Ovary (tissue), 10 donors: ENCODE measurements at regions of chr9 and their contacts with region 1.

Region 1: DNA sequence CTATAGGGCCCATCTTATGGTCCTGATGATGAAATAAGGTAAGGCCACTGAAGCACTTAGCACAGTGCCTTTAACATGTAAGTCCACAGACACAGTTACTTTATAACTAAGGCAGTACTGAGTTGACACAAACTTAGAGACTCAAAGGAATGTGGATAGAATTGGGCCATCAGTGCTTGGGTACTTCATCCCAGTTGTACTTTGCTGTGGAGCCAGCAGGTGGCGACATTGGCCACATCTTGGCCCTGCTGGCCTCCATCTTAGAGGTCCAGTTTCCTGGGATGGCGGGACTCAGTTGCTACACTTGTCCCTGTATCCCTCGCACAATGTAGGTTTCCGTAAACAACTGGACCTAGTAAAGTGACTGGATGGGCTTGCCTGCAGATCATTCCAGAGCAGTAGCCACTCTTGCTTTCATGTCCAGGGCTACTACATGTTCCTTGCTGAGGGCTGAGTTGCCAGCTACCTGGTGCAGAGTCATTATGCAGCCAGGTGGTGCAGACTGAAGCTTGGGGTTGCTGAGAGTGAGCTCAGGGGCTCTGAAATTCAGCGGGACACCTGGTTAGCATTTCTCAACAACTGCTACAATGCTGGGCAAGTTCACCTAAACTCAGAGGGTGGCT is 10.6 kb downstream of the MTAP start:
- DNase-seq: peak; percentile 30 to 73 (median 56)
- H3K4me3 ChIP-seq: no peak overlapping the region
- H3K27ac ChIP-seq: no peak overlapping the region
- H3K4me1 ChIP-seq: peaks cover 3% of the 10 kb centered on the region
- H3K27me3 ChIP-seq: no peaks in the 10 kb centered on the region
- CTCF ChIP-seq: peak; percentile 23 to 53 (median 34)
- EP300 ChIP-seq: no peak
- POLR2A ChIP-seq: no peak

Region 2: GRCh38 chr9:21761309-21761901 is 51.7 kb before region 1 on chr9:
- intact Hi-C with region 1: no loop called
- DNase-seq: no peak
- H3K4me3 ChIP-seq: no peak overlapping the region
- H3K27ac ChIP-seq: no peak overlapping the region
- H3K4me1 ChIP-seq: no peaks in the 10 kb centered on the region
- H3K27me3 ChIP-seq: no peaks in the 10 kb centered on the region
- CTCF ChIP-seq: no peak
- EP300 ChIP-seq: no peak
- POLR2A ChIP-seq: no peak

Region 3: DNA sequence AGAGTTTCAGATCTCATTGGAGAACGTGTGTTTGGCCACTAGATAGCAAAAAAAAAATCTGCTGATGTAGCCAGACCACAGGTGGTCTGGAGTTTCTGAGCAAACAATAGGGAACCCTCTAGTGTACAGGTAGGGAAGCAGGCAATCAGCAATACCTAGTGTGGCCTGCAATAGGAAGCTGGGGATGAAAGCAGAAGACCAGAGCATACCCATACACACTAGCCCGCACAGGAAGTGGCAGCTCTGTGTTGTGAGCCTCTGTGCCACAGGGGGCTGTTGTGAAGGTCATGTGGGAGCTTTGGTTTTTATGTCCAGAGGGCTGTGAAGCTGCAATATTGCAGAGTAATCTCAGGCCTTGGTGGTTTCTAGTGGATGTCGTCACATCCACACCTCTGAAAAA is 70.6 kb after region 1 on chr9:
- intact Hi-C with region 1: no loop called
- DNase-seq: no peak
- H3K4me3 ChIP-seq: no peak overlapping the region
- H3K27ac ChIP-seq: no peak overlapping the region
- H3K4me1 ChIP-seq: no peaks in the 10 kb centered on the region
- H3K27me3 ChIP-seq: no peaks in the 10 kb centered on the region
- CTCF ChIP-seq: no peak
- EP300 ChIP-seq: no peak
- POLR2A ChIP-seq: no peak

Region 4: DNA sequence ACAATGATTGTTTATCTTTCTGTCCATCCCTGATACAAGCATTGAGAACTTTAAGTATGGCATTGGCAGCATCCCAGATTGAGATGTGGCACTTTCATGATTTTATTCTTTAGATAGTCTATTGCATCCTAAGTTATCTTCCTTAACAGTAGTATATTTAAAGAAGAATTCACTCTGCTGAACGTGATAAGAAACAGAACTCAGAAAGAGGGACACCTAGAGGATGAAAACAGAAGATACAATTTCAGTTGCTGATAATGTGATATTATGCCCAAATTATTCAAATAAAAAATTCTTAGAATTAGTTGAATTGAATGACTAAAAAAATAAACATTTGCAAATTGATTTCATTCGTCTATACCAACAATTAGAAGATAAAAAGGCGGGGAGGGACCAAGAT is 415.5 kb after region 1 on chr9:
- intact Hi-C with region 1: loop called in 3 of 4 experiments (anchors 5 to 10 kb)
- DNase-seq: no peak
- H3K4me3 ChIP-seq: no peak overlapping the region
- H3K27ac ChIP-seq: no peak overlapping the region
- H3K4me1 ChIP-seq: no peaks in the 10 kb centered on the region
- H3K27me3 ChIP-seq: no peaks in the 10 kb centered on the region
- CTCF ChIP-seq: no peak
- EP300 ChIP-seq: no peak
- POLR2A ChIP-seq: no peak

Region 5: DNA sequence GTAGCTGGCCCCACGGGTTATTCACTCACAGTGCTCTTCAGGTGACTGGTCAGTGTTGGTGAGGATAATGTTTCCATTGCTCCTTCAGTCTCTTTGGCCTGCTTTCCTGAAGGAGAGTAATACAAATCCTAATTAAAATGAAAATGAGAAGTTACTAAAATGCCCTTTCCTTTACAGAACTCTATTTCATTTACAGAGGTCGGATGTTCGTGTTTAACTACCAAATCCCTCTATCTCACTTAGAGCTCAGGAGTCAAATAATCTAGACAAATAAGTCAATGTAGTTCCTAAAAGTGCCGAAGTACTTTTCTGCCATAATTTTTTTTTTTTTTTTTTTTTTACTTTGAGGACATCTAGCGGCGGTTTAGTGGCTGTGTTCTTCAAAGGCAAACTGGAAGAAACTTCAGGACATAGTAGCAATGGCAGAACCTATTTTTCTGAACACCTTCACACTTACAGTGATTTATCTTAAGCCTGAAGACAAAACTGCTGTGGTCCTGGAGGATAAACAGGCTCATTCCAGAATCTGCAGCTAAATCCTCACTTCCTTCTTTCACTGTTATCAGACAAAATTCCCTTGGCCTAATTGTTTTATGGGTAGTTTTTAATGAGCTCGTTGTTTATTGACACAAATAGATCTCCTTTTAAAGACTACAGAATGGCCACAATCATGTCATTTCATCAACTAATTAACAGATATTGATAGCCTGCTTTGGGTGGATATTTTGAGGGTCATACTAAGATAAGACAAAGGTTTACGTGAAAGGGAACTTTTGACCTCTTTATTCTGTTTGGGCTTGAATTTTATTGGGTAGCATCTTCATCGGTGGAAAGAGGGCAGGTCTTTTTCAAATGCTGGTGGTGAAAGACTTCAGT is 426.0 kb after region 1 on chr9:
- intact Hi-C with region 1: loop called in 2 of 4 experiments (anchors 10 kb)
- DNase-seq: no peak
- H3K4me3 ChIP-seq: no peak overlapping the region
- H3K27ac ChIP-seq: no peak overlapping the region
- H3K4me1 ChIP-seq: no peaks in the 10 kb centered on the region
- H3K27me3 ChIP-seq: no peaks in the 10 kb centered on the region
- CTCF ChIP-seq: peak in 1 of 3 donors; percentile 34
- EP300 ChIP-seq: no peak
- POLR2A ChIP-seq: no peak